Mammary epithelial cell (primary cell): ENCODE measurements at regions of chr3 and their contacts with region 1.

Region 1: DNA sequence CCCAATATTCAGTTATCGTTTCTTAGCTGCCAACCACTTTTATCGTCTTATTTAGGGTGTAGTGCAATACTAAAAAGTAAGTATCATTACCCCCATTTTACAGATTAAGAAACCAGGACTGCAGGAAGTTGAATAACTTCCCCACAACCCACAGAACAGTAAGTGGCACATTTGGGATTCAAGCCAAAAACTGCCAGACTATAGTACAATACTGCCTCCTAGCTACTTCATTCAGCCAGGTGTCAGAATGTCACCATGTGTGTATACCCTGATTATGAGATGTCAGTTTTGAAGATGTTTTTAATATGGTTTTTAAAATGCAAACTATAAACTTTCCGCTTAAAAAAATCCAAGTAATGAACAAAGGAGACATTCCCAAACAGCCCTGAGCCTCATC is 74.2 kb upstream of the PROK2 start:
- DNase-seq: peak; percentile 49
- H3K4me3 ChIP-seq: no peak overlapping the region
- H3K27ac ChIP-seq: no peak overlapping the region
- H3K4me1 ChIP-seq: no peaks in the 10 kb centered on the region
- H3K27me3 ChIP-seq: no peaks in the 10 kb centered on the region
- CTCF ChIP-seq: peak; percentile 52 to 74

Region 2: GRCh38 chr3:71601811-71602210 is 257.3 kb before region 1 on chr3:
- CTCF ChIA-PET with region 1: no interaction called
- dilution Hi-C with region 1: no loop called
- in situ Hi-C with region 1: no loop called
- intact Hi-C with region 1: loop called (anchors 10 kb)
- DNase-seq: peak; percentile 57
- H3K4me3 ChIP-seq: no peak overlapping the region
- H3K27ac ChIP-seq: no peak overlapping the region
- H3K4me1 ChIP-seq: peaks cover 9% of the 10 kb centered on the region
- H3K27me3 ChIP-seq: no peaks in the 10 kb centered on the region
- CTCF ChIP-seq: no peak

Region 3: GRCh38 chr3:71710906-71711494 is 148.1 kb before region 1 on chr3:
- CTCF ChIA-PET with region 1: no interaction called
- dilution Hi-C with region 1: no loop called
- in situ Hi-C with region 1: loop called in 1 of 2 experiments (anchors 25 kb)
- intact Hi-C with region 1: loop called (anchors 1 kb)
- DNase-seq: peak; percentile 33
- H3K4me3 ChIP-seq: no peak overlapping the region
- H3K27ac ChIP-seq: no peak overlapping the region
- H3K4me1 ChIP-seq: peaks cover 6% of the 10 kb centered on the region
- H3K27me3 ChIP-seq: no peaks in the 10 kb centered on the region
- CTCF ChIP-seq: peak; percentile 63 to 64

Region 4: GRCh38 chr3:71725279-71725991 is 133.7 kb before region 1 on chr3 and contains the start of gene EIF4E3:
- CTCF ChIA-PET with region 1: no interaction called
- dilution Hi-C with region 1: no loop called
- in situ Hi-C with region 1: loop called in 1 of 2 experiments (anchors 25 kb)
- intact Hi-C with region 1: loop called (anchors 1 kb)
- DNase-seq: no peak
- H3K4me3 ChIP-seq: peak within 1 kb of the TSS; percentile 46 to 86 (median 72)
- H3K27ac ChIP-seq: no peak within 1 kb of the TSS
- H3K4me1 ChIP-seq: peaks cover 7% of the 10 kb centered on the region
- H3K27me3 ChIP-seq: no peaks in the 10 kb centered on the region
- CTCF ChIP-seq: no peak
- total RNA-seq, gene EIF4E3: 3.7 to 6.3 TPM